ENCODE measurements at regions of chr7 and their contacts with region 1.

Region 1: DNA sequence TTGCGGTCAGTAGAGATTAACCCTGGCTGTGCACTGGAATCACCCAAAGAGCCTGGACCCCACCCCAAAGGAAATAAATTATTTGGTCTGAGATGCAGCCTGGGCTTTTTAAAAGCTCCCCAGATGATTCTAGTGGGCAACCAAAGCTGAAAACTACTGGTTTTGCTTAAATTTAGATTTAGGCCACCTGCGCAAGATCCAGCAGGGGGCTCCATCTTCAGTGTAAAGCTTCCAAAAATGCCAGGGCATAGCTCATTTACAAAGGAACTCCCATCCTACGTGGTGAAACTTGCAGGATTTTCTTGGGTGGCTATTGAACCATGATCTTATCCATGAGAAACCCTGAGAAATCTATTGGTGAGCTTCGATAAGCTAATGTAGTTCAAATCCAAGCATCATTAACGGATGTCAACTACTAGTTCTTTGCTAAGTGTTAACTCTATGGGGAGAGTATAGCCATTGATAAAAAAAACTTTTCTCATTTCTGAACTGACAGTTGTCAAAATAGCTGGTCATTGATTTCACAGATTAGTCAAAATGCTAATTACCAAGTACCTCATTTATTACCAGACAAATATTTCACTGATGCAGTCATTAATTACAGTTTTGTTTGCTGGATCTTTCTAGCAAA is 315.3 kb downstream of the LHFPL3 start:
- DNase-seq: no peak
- H3K4me3 ChIP-seq: no peak overlapping the region
- CTCF ChIP-seq: peak; percentile 26

Region 2: GRCh38 chr7:104653825-104654402 is 10.2 kb after region 1 on chr7:
- CTCF ChIA-PET with region 1: interaction called, 16 read pairs
- POLR2A ChIA-PET with region 1: no interaction called
- DNase-seq: no peak
- H3K4me3 ChIP-seq: no peak overlapping the region
- CTCF ChIP-seq: no peak

Region 3: GRCh38 chr7:104848138-104848990 is 204.7 kb after region 1 on chr7:
- CTCF ChIA-PET with region 1: interaction called, 30 read pairs
- POLR2A ChIA-PET with region 1: no interaction called
- DNase-seq: no peak
- H3K4me3 ChIP-seq: no peak overlapping the region
- CTCF ChIP-seq: peak; percentile 78

Region 4: DNA sequence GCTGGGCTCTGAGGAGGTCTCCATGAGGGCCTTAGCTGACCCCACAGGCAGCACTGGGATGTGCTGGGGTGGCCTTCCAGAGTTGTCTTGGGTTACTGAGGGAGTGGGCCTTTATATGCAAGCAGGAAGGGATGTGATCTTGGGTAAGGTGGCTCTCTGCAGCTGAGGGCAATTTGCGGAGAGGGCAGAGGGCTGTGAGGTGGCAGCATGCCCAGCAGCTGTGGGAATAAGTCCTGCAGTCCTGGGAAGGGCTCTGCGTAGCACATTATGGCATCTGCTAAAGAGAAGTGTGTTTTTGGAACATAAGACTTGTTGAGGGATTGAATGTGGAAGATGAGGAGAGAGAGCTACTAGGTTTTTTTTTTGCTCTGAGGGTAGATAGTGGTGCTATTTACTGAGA is 270.7 kb after region 1 on chr7:
- CTCF ChIA-PET with region 1: interaction called, 61 read pairs
- POLR2A ChIA-PET with region 1: no interaction called
- DNase-seq: no peak
- H3K4me3 ChIP-seq: no peak overlapping the region
- CTCF ChIP-seq: no peak

Measured in AG04449 (cell line).